ENCODE measurements at regions of chr17 and their contacts with region 1.

Region 1: DNA sequence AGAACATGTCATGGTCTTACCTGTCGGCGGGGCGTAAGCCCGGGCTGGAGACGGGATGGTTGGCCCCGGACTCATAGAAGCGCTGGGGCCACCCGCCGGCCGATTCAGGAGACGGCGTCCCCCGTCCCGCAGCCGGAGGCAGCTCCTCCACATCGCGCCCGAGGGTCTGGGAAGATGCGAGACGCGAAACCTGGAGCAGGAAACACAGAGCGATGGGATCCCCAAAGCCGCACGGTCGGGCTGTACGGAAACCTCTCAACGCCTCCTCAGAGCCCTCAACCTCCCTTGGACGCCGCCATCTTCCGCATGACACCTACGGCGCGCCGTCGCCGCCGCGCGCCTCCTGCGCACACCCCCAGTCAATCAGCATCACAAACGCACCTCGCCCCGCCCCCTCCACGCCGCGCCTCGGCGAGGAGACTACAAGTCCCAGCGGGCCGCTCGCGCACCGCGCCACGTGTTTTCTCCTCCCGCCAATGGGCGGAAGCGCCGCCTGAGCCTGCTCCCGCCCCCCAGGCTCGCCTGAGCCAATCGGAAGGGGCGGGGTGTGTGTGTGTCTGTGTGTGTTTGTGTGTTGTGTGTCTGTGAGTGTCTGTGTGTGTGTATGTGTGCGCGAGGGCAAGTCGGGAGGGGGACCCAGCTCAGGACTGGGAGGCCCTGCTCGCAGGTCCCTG is at the starts of genes ATPAF2 and GID4:
- DNase-seq: peak; percentile 100
- H3K4me3 Mint-ChIP-seq: peak within 1 kb of the TSS; percentile 100
- H3K27ac Mint-ChIP-seq: peak within 1 kb of the TSS; percentile 99
- H3K4me1 Mint-ChIP-seq: peaks cover 43% of the 10 kb centered on the region
- H3K27me3 Mint-ChIP-seq: no peaks in the 10 kb centered on the region
- total RNA-seq, gene ATPAF2: 34.9 and 37.8 TPM in 2 replicates
- total RNA-seq, gene GID4: 9.6 and 10.0 TPM in 2 replicates

Region 2: GRCh38 chr17:16537130-16537458 is 1501.9 kb before region 1 on chr17:
- intact Hi-C with region 1: loop called (anchors 5 kb)
- DNase-seq: no peak
- H3K4me3 Mint-ChIP-seq: peak overlapping the region; percentile 91
- H3K27ac Mint-ChIP-seq: peak overlapping the region; percentile 52
- H3K4me1 Mint-ChIP-seq: peaks cover 16% of the 10 kb centered on the region
- H3K27me3 Mint-ChIP-seq: no peaks in the 10 kb centered on the region

Region 3: DNA sequence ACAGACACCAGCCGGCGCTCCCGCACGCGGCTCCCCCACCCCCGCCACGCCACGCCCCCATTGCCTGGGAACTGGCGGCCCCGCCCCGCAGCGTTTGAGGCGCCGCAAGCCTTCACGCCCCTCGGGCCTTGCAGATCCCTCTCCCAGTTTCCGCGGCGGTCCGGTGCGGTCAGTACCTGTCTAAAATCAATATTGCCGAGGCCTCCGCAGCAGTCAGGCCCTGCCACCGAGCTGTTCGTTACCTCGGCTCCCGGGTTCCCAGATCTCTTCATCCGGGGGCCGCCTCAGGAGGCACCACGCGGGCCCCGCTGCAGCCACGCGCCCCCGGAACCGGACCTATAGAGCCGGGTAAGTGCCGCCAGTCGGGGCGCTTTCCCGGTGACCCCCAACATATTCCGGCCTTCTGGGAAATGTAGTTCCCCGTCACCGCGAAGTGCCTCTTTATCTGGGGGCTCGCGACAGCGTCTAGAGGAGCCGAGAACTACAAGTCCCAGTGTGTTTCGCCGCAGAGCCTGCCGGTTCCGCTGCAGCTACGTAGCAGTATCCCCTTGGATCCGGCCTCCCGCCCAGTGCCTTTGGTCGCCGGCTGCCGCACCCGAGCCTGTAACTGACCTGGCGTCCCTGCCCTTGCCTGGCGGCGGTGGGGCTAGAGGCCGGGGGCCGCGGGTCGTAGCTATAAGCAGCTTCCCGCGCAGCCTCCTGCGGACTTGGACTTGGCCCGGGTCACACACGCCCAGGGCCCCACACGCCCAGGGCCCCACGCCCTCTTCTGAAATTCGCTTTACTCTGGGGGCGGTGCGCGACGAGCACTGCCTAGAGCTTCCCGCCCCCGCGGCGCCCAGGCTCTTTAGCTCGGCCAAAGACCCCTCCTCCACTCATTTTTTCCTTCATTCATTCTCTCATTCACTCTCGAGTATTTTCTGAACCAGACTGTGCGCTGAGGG is 447.4 kb before region 1 on chr17 and contains the start of gene PEMT:
- intact Hi-C with region 1: loop called (anchors 2 kb)
- DNase-seq: peak; percentile 90
- H3K4me3 Mint-ChIP-seq: peak within 1 kb of the TSS; percentile 98
- H3K27ac Mint-ChIP-seq: peak within 1 kb of the TSS; percentile 94
- H3K4me1 Mint-ChIP-seq: peaks cover 18% of the 10 kb centered on the region
- H3K27me3 Mint-ChIP-seq: no peaks in the 10 kb centered on the region
- total RNA-seq, gene PEMT: 39.9 and 45.1 TPM in 2 replicates

Region 4: DNA sequence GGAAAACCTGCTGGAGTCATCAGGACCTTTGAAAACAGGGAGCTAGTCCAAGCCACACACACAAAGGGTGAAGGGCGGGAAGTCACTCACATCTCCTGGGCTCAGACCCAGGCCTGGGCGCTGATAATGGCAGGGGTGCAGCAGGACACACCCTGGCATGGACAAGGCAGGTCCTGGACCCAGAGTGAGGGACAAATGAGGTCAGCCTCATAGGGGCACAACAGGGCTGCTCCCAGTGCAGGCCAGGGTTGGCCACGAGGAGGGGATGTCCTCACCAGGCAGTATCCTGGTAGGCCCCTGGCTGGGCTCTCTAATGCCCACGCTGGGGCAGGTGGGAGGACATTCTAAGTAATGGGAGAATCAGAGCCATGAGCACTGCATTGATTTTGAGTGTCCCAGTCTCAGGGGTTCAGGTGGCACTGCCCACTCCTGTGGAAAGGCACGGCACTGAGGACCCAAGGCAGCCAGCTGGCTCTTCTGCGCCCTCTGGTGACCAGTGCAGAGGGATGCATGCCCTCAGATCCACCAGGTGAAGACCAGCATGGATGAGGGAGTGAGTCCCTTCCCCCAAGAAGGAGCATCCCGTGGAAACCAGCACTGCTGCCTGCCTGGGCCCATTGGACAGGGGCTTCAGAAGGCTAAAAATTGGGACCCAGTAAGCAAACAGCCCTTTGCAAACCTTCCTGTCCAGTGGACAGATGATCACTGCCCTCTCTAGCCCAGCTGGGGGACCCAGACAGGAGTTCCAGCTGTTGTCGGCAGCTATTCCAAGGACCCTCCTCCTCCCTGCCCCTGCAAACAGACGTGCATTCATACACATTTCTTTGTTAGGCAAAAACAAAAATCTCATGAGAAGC is 178.9 kb before region 1 on chr17:
- intact Hi-C with region 1: loop called (anchors 2 kb)
- DNase-seq: peak; percentile 59
- H3K4me3 Mint-ChIP-seq: no peak overlapping the region
- H3K27ac Mint-ChIP-seq: no peak overlapping the region
- H3K4me1 Mint-ChIP-seq: peaks cover 24% of the 10 kb centered on the region
- H3K27me3 Mint-ChIP-seq: no peaks in the 10 kb centered on the region

Region 5: GRCh38 chr17:17959520-17960361 is 79.3 kb before region 1 on chr17:
- intact Hi-C with region 1: loop called (anchors 2 kb)
- DNase-seq: no peak
- H3K4me3 Mint-ChIP-seq: peak overlapping the region; percentile 85
- H3K27ac Mint-ChIP-seq: peak overlapping the region; percentile 100
- H3K4me1 Mint-ChIP-seq: peaks cover 55% of the 10 kb centered on the region
- H3K27me3 Mint-ChIP-seq: no peaks in the 10 kb centered on the region

Region 6: GRCh38 chr17:18225121-18225566 is 186.1 kb after region 1 on chr17:
- intact Hi-C with region 1: loop called (anchors 2 kb)
- DNase-seq: peak; percentile 95
- H3K4me3 Mint-ChIP-seq: peak overlapping the region; percentile 70
- H3K27ac Mint-ChIP-seq: peak overlapping the region; percentile 48
- H3K4me1 Mint-ChIP-seq: peaks cover 20% of the 10 kb centered on the region
- H3K27me3 Mint-ChIP-seq: peaks cover 2% of the 10 kb centered on the region

Region 7: GRCh38 chr17:18280766-18281371 is 241.9 kb after region 1 on chr17:
- intact Hi-C with region 1: no loop called
- DNase-seq: no peak
- H3K4me3 Mint-ChIP-seq: no peak overlapping the region
- H3K27ac Mint-ChIP-seq: no peak overlapping the region
- H3K4me1 Mint-ChIP-seq: no peaks in the 10 kb centered on the region
- H3K27me3 Mint-ChIP-seq: no peaks in the 10 kb centered on the region

Measured in activated T-helper 1 cell treated with anti-CD3 and anti-CD28 coated beads, Interleukin-12 subunit alpha, Interleukin-12 subunit beta, Interleukin-2, Interleukin-4 antibody, amounts not matched to agents 30 ng/mL and 10 ng/mL and 1 ng/mL, durations not matched to agents 14 hours and 24 hours and 36 hours (primary cell).